Endothelial cell of umbilical vein (primary cell): ENCODE measurements at regions of chr5 and their contacts with region 1.

Region 1: GRCh38 chr5:127746756-127747155 is 43.6 kb downstream of the CCDC192 start:
- DNase-seq: peak; percentile 27
- H3K4me3 ChIP-seq: no peak overlapping the region
- H3K27ac ChIP-seq: no peak overlapping the region
- H3K4me1 ChIP-seq: no peaks in the 10 kb centered on the region
- H3K27me3 ChIP-seq: peaks cover 7 to 9% of the 10 kb centered on the region in 2 experiments
- CTCF ChIP-seq: peak; percentile 21 to 29
- POLR2A ChIP-seq: no peak

Region 2: DNA sequence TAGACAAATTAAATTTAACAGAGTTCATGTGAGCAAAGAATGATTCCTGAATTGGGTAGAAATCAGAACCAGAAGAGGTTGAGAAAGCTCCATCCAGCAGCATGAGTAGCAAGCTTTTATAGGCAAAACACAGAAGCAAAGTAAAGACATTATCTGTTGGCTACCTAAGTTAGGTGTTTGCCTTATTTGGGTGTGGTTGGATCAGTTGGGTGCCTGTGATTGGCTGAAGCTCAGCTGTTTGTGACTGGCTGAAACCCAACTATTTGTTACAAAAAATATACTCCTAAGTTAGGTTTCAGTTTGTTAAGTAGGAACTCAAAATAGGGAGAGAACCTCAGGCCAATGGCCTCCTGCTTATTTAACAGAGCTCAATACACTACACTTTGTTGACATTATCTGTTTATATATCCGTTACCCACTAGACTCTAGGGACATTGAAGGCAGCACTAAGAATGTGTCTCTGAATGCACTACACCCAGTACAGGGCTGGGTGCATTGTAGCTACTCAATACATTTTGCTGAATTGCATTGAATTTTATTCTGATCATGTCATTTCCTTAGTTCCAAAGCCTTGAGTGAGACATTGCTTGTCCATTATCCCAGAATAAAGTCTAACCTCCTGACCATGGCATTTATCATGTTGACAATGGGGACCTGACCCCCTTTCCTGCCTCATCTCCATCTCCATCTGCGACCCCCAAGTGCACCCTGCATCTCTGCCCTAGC is 55.2 kb after region 1 on chr5:
- CTCF ChIA-PET with region 1: no interaction called
- POLR2A ChIA-PET with region 1: no interaction called
- dilution Hi-C with region 1: no loop called
- intact Hi-C with region 1: no loop called
- DNase-seq: peak; percentile 71
- H3K4me3 ChIP-seq: no peak overlapping the region
- H3K27ac ChIP-seq: peak overlapping the region; percentile 75
- H3K4me1 ChIP-seq: peaks cover 17% of the 10 kb centered on the region
- H3K27me3 ChIP-seq: no peaks in the 10 kb centered on the region
- CTCF ChIP-seq: no peak
- POLR2A ChIP-seq: no peak

Region 3: DNA sequence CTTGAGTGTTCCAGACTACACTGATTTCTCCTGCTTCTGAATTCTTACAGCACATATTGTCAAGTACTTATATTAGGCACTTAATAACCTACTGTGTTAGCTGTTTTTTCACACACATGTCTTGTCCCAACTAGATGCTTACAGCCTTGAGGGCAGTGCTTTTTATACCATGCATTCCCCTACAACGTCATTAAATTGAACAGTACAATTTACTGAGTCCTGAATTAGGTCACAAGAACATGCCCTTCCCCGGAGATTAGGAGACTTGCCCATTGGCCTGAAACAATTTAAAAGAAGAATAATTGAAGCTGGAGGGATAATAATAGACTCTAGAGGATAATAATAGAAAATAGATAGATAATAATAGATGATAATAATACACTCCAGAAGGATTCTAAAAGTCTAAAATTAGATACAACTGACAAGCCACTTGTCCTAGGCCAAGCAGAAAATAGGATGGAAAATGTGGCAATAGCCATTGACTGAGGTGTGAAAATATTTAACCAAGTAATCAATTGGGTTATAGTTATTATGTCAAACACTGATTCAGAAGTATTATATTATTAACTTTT is 224.2 kb after region 1 on chr5:
- CTCF ChIA-PET with region 1: no interaction called
- POLR2A ChIA-PET with region 1: no interaction called
- dilution Hi-C with region 1: no loop called
- intact Hi-C with region 1: no loop called
- DNase-seq: no peak
- H3K4me3 ChIP-seq: no peak overlapping the region
- H3K27ac ChIP-seq: no peak overlapping the region
- H3K4me1 ChIP-seq: no peaks in the 10 kb centered on the region
- H3K27me3 ChIP-seq: no peaks in the 10 kb centered on the region
- CTCF ChIP-seq: no peak
- POLR2A ChIP-seq: no peak

Region 4: DNA sequence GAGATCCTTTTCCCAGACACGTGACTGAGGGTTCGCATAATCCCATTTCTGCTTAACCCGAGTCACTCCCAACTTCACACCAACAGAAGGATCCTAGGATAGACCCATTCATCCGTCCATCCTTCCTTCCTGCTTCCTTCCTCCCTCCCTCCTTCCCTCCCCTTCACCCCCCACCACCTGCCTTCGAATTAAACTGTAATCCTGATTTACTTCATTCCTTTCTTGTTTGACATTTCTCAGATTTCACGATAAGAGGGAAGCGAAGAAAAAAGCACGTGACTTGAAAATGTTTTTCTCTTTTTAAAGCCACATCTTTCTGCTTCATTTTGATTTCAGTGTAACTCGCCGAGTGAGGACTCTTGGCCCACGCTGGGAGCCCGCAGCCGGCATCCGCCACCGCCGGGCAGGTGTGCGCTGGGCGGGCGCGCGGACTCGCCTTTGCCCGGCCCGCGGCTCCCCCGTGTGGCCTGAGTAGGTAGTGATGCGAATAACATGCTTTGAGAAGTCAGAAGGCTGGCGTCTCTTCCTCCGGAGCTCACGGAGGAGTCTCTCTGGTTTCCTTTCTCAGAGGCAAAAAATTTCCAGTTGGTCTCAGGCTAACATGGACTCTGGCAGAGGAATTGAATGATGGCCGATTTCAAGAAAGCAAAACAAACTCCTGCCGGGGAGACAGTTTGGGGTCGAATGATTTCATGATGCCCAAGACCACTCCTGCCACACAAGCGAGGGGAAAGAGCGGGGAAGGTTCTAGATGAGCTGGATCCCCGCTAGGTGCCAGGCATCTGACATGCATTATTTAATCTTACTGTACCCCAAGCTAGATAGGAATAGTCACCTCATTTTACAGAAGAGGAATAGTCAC is 454.5 kb after region 1 on chr5:
- CTCF ChIA-PET with region 1: interaction called, 3 read pairs
- POLR2A ChIA-PET with region 1: no interaction called
- dilution Hi-C with region 1: no loop called
- intact Hi-C with region 1: loop called (anchors 1 kb)
- DNase-seq: peak; percentile 63
- H3K4me3 ChIP-seq: no peak overlapping the region
- H3K27ac ChIP-seq: no peak overlapping the region
- H3K4me1 ChIP-seq: peaks cover 10% of the 10 kb centered on the region
- H3K27me3 ChIP-seq: no peaks in the 10 kb centered on the region
- CTCF ChIP-seq: peak; percentile 79 to 85
- POLR2A ChIP-seq: no peak